ENCODE measurements at regions of chr3 and their contacts with region 1.

Region 1: DNA sequence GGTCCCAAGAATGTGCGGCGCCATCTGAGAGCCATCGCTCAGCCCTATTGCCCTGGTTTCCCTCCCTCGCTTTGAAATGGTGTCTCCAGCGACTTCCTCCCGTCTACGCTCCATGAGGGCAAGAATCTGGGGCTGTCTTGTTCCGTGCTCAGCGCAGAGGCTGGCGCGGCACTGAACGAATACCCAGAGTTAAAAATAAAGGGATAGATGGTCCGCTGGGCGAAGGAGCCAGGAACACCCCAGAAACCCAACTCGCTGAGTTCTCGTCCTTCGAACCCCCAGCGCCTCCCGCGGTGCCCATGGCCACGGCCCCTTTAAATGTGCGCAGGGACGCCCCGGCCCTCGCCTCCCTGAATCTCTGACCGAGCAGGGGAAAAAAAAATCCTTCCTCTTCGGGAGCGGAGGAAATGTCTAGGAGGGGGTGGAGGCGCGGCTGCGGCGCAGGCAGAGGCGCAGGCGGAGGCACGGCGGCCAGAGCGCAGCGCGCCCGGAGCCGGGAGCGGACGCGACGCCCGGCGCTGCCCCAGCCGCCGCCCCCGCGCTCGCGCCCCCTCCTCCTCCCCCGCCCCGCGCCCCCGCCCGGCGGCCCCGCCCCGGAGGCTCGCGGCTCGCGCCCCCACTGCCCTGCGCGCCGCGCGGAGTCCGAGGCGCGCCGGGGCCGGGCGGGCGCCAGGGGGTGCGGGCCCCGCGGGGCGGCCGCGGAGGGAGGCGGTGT is 8.5 kb upstream of the FGD5 start:
- DNase-seq: no peak
- H3K4me3 Mint-ChIP-seq: no peak overlapping the region
- H3K27ac Mint-ChIP-seq: no peak overlapping the region
- H3K4me1 Mint-ChIP-seq: peaks cover 10% of the 10 kb centered on the region
- H3K27me3 Mint-ChIP-seq: peaks cover 73% of the 10 kb centered on the region

Region 2: DNA sequence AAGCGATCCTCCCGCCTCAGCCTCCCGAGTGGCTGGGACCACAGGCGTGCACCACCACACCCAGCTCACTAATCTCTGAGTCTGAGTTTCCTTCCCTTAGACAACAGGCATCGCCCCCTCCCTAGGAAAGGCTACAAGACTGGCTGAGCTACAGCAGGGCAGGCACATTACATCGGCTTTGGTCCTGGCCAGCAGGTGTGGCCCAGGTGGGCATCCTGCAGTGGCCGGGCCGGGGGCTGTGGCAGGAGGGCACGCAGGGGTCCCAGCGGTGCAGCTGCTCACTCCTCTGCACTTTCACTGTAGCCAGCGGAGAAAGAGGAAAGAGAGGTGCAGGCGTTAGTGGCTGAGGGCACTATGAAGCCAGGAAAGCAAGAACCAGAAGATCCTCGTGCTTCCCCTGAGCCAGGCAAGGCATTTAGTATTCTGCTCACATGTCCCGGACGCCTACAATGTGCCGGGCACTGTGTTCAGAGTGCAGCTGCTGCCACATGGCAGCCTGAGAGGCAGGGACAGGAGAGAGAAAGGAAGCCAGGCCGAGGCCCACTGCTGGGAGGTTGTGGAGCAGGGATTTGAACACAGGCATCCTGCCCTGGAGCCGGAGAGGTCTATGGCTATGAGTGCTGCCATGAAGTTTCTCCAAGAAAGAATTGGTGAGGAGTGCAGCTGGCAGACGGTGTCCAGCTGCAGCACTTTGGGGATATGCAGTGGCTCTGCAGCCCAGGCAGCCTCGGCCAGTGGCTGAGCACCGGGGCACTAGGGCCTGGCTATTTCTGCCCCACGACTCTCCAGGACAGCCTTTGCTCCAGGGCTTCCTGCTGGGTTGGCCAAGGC is 292.4 kb before region 1 on chr3:
- intact Hi-C with region 1: loop called (anchors 5 kb)
- DNase-seq: no peak
- H3K4me3 Mint-ChIP-seq: no peak overlapping the region
- H3K27ac Mint-ChIP-seq: no peak overlapping the region
- H3K4me1 Mint-ChIP-seq: no peaks in the 10 kb centered on the region
- H3K27me3 Mint-ChIP-seq: no peaks in the 10 kb centered on the region

Region 3: GRCh38 chr3:15007681-15008141 is 197.5 kb after region 1 on chr3:
- intact Hi-C with region 1: no loop called
- DNase-seq: no peak
- H3K4me3 Mint-ChIP-seq: no peak overlapping the region
- H3K27ac Mint-ChIP-seq: no peak overlapping the region
- H3K4me1 Mint-ChIP-seq: peaks cover 6% of the 10 kb centered on the region
- H3K27me3 Mint-ChIP-seq: no peaks in the 10 kb centered on the region